PC-9 (cell line): ENCODE measurements at regions of chr2 and their contacts with region 1.

Region 1: GRCh38 chr2:63692002-63692606 is 103.3 kb downstream of the MDH1 start:
- DNase-seq: peak; percentile 8 to 41
- H3K4me3 ChIP-seq: no peak overlapping the region
- H3K27ac ChIP-seq: no peak overlapping the region
- H3K4me1 ChIP-seq: peaks cover 9% of the 10 kb centered on the region; the same call in 1 of the 2 replicates
- H3K27me3 ChIP-seq: no peaks in the 10 kb centered on the region
- CTCF ChIP-seq: peak; percentile 85

Region 2: GRCh38 chr2:62257466-62257865 is 1434.6 kb before region 1 on chr2:
- CTCF ChIA-PET with region 1: no interaction called
- POLR2A ChIA-PET with region 1: no interaction called
- intact Hi-C with region 1: loop called (anchors 5 kb)
- DNase-seq: no peak
- H3K4me3 ChIP-seq: no peak overlapping the region
- H3K27ac ChIP-seq: no peak overlapping the region
- H3K4me1 ChIP-seq: no peaks in the 10 kb centered on the region
- H3K27me3 ChIP-seq: no peaks in the 10 kb centered on the region
- CTCF ChIP-seq: no peak

Region 3: DNA sequence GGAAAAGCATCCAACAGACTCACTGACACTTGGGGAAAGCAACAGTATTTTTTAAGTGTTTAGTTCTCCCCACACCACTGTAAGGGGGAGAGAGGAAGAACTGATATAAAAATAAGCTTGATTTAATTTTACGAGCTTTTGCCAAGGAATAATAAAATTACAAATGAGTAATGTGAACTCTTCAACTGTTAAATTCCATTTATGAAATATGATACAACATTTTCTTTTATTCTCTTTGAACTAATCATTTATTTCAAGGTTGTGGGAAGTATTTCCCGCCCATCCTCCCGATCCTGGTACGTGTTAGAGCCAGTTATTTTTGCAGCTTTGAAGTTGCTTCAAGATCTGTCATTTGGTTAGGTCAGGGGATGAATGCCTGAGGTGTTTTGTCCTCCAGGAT is 139.1 kb before region 1 on chr2:
- CTCF ChIA-PET with region 1: no interaction called
- POLR2A ChIA-PET with region 1: no interaction called
- intact Hi-C with region 1: no loop called
- DNase-seq: peak in 1 of 2 experiments; percentile 61
- H3K4me3 ChIP-seq: no peak overlapping the region
- H3K27ac ChIP-seq: no peak overlapping the region
- H3K4me1 ChIP-seq: peaks cover 13% of the 10 kb centered on the region
- H3K27me3 ChIP-seq: no peaks in the 10 kb centered on the region
- CTCF ChIP-seq: no peak

Region 4: DNA sequence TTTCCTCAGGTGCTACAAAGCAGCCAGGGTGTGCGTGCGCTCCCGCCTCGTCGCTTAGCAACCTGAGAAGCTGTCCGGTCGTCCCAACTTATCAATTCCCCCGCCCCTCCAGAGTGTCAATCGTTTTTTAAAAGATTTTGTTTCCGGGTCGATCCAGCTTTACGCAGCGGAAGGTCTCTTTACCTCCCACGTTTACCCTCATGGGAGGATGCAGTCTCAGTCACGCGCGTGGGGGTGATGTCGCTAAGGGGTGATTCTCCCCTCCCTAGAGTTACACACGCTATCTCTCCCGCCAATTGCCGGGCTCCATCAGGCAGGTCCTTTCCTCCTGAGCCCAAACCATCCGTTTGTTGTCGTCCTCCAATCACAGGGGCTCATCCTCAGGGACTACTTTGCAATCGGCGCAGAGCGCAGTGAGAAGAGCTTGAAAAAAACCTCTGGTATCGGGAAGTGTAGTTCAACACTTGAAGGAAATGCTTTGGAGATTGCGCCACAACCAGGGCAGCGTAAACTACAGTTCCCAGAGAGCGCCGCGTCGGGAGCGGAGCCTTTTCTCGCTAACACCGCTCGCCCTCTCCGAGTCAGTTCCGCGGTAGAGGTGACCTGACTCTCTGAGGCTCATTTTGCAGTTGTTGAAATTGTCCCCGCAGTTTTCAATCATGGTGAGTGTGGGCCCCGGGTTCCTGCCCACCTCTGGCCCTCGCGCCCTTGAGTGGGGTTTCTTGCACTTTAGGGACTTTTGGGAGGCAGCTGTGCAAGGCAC is 103.5 kb before region 1 on chr2 and contains the starts of genes MDH1 and WDPCP:
- CTCF ChIA-PET with region 1: no interaction called
- POLR2A ChIA-PET with region 1: no interaction called
- intact Hi-C with region 1: loop called (anchors 2 kb)
- DNase-seq: peak; percentile 94 to 100
- H3K4me3 ChIP-seq: peak within 1 kb of the TSS; percentile 63
- H3K27ac ChIP-seq: peak within 1 kb of the TSS; percentile 72
- H3K4me1 ChIP-seq: peaks cover 23% of the 10 kb centered on the region
- H3K27me3 ChIP-seq: no peaks in the 10 kb centered on the region
- CTCF ChIP-seq: no peak
- total RNA-seq, gene MDH1: 157 and 162 TPM in 2 replicates
- total RNA-seq, gene WDPCP: 15.2 and 15.5 TPM in 2 replicates